Ascending aorta (tissue), 2 donors: ENCODE measurements at regions of chr4 and their contacts with region 1.

Region 1: GRCh38 chr4:74157561-74158465 is at the start of gene MTHFD2L:
- DNase-seq: peak; percentile 81 to 97
- H3K4me3 ChIP-seq: peak within 1 kb of the TSS; percentile 73 to 82
- H3K27ac ChIP-seq: peak within 1 kb of the TSS; percentile 90 to 92
- H3K4me1 ChIP-seq: peaks cover 4 to 14% of the 10 kb centered on the region in 2 donors
- H3K27me3 ChIP-seq: no peaks in the 10 kb centered on the region
- CTCF ChIP-seq: no peak
- total RNA-seq, gene MTHFD2L: not detected

Region 2: DNA sequence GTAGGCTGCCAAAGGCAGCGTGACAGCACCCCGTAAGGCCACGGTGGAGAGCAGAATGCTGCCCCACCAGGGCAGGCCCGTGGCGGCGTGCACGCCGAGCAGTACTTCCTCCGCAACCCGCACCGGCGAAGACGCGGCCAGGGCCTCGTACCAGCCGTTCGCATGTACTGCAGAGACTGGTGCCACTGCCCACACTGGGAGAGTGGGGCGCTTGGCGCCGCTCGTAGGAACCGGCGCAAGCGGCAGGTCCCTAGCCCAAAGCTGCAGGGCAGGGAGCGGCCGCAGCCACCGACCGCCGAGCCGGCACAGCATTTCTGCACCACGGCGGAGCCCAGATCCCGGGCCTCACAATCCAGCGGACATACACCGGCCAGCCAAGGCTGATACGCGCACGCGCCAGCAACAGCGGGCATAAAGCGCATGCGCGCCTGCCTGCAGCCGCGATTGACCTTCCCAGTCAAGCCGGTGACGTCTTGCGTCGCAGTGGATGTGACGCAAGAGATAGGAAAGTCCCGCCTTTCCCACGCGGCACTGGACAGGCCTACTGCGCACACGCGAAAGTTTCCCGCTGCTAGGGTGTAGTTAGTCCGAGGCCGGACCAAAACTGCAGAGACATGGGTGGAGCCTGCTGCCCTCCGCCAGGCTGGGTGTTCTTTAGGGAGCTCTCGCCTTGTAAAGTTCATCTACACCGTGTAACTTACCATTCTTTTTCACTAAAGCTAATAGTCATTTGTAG is 1088.3 kb before region 1 on chr4 and contains the start of gene COX18:
- intact Hi-C with region 1: loop called (anchors 5 kb)
- DNase-seq: peak; percentile 93 to 99
- H3K4me3 ChIP-seq: peak within 1 kb of the TSS; percentile 60 to 99
- H3K27ac ChIP-seq: peak within 1 kb of the TSS; percentile 88 to 96
- H3K4me1 ChIP-seq: peaks cover 3 to 7% of the 10 kb centered on the region in 2 donors
- H3K27me3 ChIP-seq: no peaks in the 10 kb centered on the region
- CTCF ChIP-seq: peak in 1 of 3 experiments; percentile 6
- total RNA-seq, gene COX18: 22.7 TPM

Region 3: GRCh38 chr4:73704314-73705055 is 453.3 kb before region 1 on chr4:
- intact Hi-C with region 1: loop called (anchors 10 kb)
- DNase-seq: peak; percentile 72 to 93
- H3K4me3 ChIP-seq: no peak overlapping the region
- H3K27ac ChIP-seq: peak overlapping the region; percentile 67 to 83
- H3K4me1 ChIP-seq: peaks cover 0 to 16% of the 10 kb centered on the region in 2 donors
- H3K27me3 ChIP-seq: no peaks in the 10 kb centered on the region
- CTCF ChIP-seq: no peak

Region 4: GRCh38 chr4:74109116-74109869 is 48.5 kb before region 1 on chr4:
- intact Hi-C with region 1: loop called (anchors 5 kb)
- DNase-seq: no peak
- H3K4me3 ChIP-seq: no peak overlapping the region
- H3K27ac ChIP-seq: peak overlapping the region; percentile 78 to 84
- H3K4me1 ChIP-seq: peaks cover 11 to 53% of the 10 kb centered on the region in 2 donors
- H3K27me3 ChIP-seq: no peaks in the 10 kb centered on the region
- CTCF ChIP-seq: no peak

Region 5: GRCh38 chr4:75497133-75497532 is 1339.3 kb after region 1 on chr4:
- intact Hi-C with region 1: loop called (anchors 5 kb)
- DNase-seq: no peak
- H3K4me3 ChIP-seq: no peak overlapping the region
- H3K27ac ChIP-seq: no peak overlapping the region
- H3K4me1 ChIP-seq: no peaks in the 10 kb centered on the region
- H3K27me3 ChIP-seq: no peaks in the 10 kb centered on the region
- CTCF ChIP-seq: no peak